ENCODE measurements at regions of chr15 and their contacts with region 1.

Region 1: DNA sequence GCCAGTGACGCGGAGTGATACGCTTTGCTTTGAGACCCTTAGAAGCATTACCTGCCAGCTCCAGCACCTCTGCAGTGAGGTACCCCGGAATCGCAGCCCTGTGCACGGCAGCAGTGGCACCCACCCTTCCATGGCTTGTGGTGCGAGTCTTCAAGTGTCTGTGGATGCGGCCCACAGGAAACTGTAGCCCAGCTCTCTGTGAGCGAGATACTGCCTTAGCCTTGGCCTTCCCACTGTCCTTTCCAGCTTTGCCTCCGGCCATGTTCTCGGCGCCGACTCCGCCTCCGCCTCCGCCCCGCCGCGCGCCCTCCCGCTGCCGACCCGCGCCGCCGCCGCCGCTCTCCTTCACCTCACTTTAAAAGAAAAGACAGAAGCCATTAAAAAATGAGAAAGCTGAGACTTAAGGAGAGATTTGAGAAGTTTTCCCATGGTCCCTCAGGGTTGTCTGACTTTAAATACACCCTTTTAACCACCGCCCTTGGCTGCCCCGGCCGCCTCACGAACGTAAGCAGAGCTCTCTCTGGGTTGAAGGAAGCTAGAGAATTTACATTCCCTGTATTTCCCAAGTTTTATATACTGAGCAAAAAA is 78.5 kb upstream of the FAM174B start:
- DNase-seq: no peak
- ATAC-seq: peak; percentile 58 to 79
- H3K4me3 ChIP-seq: peak overlapping the region; percentile 25 to 49 (median 36)
- H3K27ac ChIP-seq: peak overlapping the region in 2 of 4 donors; percentile 68 to 70
- H3K4me1 ChIP-seq: no peaks in the 10 kb centered on the region
- H3K27me3 ChIP-seq: no peaks in the 10 kb centered on the region
- CTCF ChIP-seq: no peak
- POLR2A ChIP-seq: no peak

Region 2: DNA sequence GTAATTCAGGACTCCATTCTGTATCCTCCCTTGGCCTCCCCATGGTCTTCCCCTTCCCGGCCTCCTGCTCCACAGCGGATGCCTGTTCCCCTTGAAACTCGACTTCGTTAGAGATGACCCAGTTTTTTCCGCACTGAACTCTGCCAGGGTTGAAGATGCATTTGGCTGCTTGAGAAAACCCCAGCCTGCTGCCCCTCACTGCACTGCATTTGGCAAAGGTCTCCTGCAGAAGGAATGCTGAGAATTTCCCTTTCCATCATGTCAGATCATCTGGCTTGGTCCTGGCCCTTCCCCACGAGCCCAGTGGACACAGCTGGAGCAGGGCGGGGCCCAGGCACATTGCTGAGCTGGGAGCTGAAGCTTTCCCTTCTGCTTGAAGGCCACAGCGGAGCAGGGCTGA is 392.6 kb after region 1 on chr15:
- in situ Hi-C with region 1: no loop called
- intact Hi-C with region 1: loop called (anchors 5 kb)
- DNase-seq: peak in 1 of 2 donors; percentile 63
- ATAC-seq: peak; percentile 49 to 55
- H3K4me3 ChIP-seq: no peak overlapping the region
- H3K27ac ChIP-seq: peak overlapping the region; percentile 1 to 59 (median 36)
- H3K4me1 ChIP-seq: no peaks in the 10 kb centered on the region
- H3K27me3 ChIP-seq: no peaks in the 10 kb centered on the region
- CTCF ChIP-seq: no peak
- POLR2A ChIP-seq: no peak